ENCODE measurements at regions of chr2 and their contacts with region 1.

Region 1: GRCh38 chr2:14634201-14634884 is 1.8 kb downstream of the LRATD1 start:
- DNase-seq: peak; percentile 88
- H3K4me3 Mint-ChIP-seq: peak overlapping the region; percentile 75
- H3K27ac Mint-ChIP-seq: peak overlapping the region; percentile 88
- H3K4me1 Mint-ChIP-seq: peaks cover 15% of the 10 kb centered on the region
- H3K27me3 Mint-ChIP-seq: no peaks in the 10 kb centered on the region
- CTCF ChIP-seq: peak; percentile 72

Region 2: GRCh38 chr2:13056259-13056843 is 1578.0 kb before region 1 on chr2:
- CTCF ChIA-PET with region 1: interaction called, 4 read pairs
- POLR2A ChIA-PET with region 1: no interaction called
- intact Hi-C with region 1: loop called (anchors 2 kb)
- DNase-seq: peak; percentile 42
- H3K4me3 Mint-ChIP-seq: no peak overlapping the region
- H3K27ac Mint-ChIP-seq: no peak overlapping the region
- H3K4me1 Mint-ChIP-seq: no peaks in the 10 kb centered on the region
- H3K27me3 Mint-ChIP-seq: no peaks in the 10 kb centered on the region
- CTCF ChIP-seq: peak; percentile 29

Region 3: DNA sequence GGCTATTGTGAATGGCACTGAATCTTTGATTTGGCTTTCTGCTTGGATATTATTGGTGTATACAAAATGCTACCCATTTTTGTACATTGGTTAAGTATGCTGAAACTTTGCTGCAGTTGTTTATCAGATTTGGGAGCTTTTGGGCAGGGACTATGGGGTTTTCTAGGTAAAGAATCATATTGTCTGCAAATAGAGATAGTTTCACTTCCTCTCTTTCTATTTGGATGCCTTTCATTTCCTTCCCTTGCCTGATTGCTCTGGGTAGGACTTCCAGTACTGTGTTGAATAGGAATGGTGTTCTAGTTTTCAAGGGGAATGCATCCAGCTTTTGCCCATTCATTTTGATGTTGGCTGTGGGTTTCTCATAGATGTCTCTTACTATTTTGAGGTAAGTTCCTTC is 490.9 kb before region 1 on chr2:
- CTCF ChIA-PET with region 1: no interaction called
- POLR2A ChIA-PET with region 1: no interaction called
- intact Hi-C with region 1: no loop called
- DNase-seq: no peak
- H3K4me3 Mint-ChIP-seq: no peak overlapping the region
- H3K27ac Mint-ChIP-seq: no peak overlapping the region
- H3K4me1 Mint-ChIP-seq: no peaks in the 10 kb centered on the region
- H3K27me3 Mint-ChIP-seq: no peaks in the 10 kb centered on the region
- CTCF ChIP-seq: no peak

Region 4: GRCh38 chr2:14189929-14190328 is 444.4 kb before region 1 on chr2:
- CTCF ChIA-PET with region 1: no interaction called
- POLR2A ChIA-PET with region 1: no interaction called
- intact Hi-C with region 1: loop called (anchors 10 kb)
- DNase-seq: peak; percentile 68
- H3K4me3 Mint-ChIP-seq: peak overlapping the region; percentile 7
- H3K27ac Mint-ChIP-seq: peak overlapping the region; percentile 6
- H3K4me1 Mint-ChIP-seq: peaks cover 12% of the 10 kb centered on the region
- H3K27me3 Mint-ChIP-seq: no peaks in the 10 kb centered on the region
- CTCF ChIP-seq: no peak

Region 5: DNA sequence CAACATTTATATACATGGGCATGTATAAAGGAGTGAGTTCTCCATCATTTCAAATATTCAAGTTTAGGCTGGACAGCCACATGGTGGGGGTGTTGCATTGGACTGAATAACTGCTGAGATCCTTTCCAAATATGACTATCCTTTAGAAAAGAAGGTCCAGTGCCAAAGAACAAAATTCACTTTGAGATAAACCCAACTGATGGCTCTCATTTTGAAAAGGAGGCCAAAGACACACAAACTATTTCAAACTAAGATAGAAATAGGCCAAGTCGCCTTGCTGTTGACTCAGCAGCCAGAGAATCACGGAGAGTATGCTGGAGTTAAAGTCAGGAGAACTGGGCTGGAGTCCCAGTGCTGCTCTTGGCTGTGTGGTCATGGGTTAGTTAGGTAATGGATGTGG is 206.3 kb before region 1 on chr2:
- CTCF ChIA-PET with region 1: interaction called, 4 read pairs
- POLR2A ChIA-PET with region 1: no interaction called
- intact Hi-C with region 1: loop called (anchors 1 kb)
- DNase-seq: peak; percentile 46
- H3K4me3 Mint-ChIP-seq: no peak overlapping the region
- H3K27ac Mint-ChIP-seq: no peak overlapping the region
- H3K4me1 Mint-ChIP-seq: no peaks in the 10 kb centered on the region
- H3K27me3 Mint-ChIP-seq: no peaks in the 10 kb centered on the region
- CTCF ChIP-seq: no peak

Region 6: DNA sequence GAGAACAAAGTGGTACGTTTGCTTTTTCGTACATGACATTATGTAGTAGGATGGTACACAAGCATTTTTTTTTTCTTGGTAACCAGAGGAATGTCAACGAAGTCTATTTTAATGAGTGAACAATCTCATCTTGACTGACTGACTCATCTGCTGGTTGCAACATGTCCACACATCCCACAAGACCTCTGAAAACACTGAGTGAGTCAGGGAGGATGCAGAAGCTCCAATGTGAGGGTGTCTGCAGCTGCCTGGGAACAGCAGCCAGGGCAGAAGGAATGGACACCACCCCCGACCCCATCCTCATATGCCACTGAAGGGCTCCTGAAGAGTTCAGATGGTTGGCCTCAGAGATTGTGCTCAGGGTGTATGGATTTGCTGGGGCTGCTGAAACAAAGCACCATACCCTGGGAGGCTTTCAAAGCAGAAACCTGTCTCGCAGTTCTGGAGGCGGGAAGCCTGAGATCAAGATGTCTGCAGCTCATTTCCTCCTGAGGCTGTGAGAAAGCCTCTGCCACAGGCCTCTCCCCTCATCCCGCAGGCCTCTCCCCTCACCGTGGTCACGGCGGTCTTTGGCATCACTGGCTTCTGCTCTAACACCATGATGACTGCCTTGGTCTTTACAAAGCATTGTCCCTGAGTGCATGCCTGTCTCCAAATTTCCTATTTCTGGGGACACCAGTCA is 122.8 kb after region 1 on chr2:
- CTCF ChIA-PET with region 1: interaction called, 3 read pairs
- POLR2A ChIA-PET with region 1: interaction called, 3 read pairs
- intact Hi-C with region 1: loop called (anchors 2 kb)
- DNase-seq: peak; percentile 93
- H3K4me3 Mint-ChIP-seq: peak overlapping the region; percentile 20
- H3K27ac Mint-ChIP-seq: no peak overlapping the region
- H3K4me1 Mint-ChIP-seq: peaks cover 19% of the 10 kb centered on the region
- H3K27me3 Mint-ChIP-seq: no peaks in the 10 kb centered on the region
- CTCF ChIP-seq: no peak

Region 7: DNA sequence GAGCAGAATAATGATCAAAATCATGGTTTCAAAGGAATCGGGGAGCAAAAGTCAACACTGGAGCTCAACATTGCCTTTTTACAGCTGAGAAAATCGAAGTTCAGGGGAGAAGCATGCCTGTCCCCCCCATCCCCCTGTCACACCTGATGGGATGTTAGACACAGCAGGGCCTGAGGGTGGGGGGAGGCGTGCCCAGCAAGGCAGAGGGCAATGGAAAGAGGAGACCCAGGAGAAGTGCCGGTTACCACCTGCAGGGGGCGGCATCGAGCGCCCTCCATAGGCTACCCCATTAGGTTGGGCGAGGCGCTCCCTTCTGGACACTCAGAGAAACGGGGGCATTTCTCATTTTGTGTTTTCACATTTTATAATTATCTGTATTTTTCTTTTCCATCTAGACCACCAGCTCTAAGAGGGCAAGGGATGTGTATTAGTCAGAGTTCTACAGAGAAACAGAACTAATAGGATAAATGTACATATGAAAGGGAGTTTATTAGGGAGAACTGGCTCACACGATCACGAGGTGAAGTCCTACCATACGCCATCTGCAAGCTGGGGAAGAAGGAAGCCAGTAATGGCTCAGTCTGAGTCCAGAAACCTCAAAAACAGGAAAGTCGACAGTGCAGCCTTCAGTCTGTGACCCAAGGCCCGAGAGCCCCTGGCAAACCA is 269.5 kb after region 1 on chr2:
- CTCF ChIA-PET with region 1: no interaction called
- POLR2A ChIA-PET with region 1: no interaction called
- intact Hi-C with region 1: loop called (anchors 5 kb)
- DNase-seq: peak; percentile 74
- H3K4me3 Mint-ChIP-seq: no peak overlapping the region
- H3K27ac Mint-ChIP-seq: no peak overlapping the region
- H3K4me1 Mint-ChIP-seq: no peaks in the 10 kb centered on the region
- H3K27me3 Mint-ChIP-seq: no peaks in the 10 kb centered on the region
- CTCF ChIP-seq: peak; percentile 67

Region 8: DNA sequence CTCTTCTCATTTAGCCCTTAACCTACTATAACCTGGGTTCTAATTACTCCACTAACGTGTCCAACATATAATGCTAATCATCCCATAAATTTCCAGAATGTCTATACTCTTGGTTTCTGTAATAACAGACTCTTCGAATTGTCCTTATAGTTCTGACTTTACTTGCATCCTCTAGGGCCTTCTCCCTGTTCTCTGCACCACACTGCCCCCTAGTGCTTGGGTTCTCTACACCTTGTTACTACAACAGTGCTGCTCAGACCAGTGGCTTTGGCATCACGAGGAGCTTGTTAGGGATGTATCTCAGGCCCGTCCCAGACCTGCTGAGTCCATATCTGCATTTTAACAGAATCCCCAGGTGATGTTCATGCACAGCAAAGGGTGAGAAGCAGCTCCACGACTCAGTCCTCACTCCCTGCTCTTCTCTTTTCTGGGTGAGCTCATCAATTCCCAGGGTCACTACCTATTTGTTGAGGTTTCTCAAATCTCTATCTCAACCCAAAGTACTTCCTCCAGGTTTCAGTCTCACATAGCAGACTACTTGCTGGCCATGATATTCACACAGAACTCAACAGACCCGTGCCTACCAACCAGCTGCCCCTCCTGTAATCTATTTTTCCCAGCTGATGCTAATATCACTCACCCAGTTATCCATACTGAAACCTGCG is 942.9 kb after region 1 on chr2:
- CTCF ChIA-PET with region 1: no interaction called
- POLR2A ChIA-PET with region 1: interaction called, 4 read pairs
- intact Hi-C with region 1: loop called (anchors 5 kb)
- DNase-seq: peak; percentile 93
- H3K4me3 Mint-ChIP-seq: no peak overlapping the region
- H3K27ac Mint-ChIP-seq: no peak overlapping the region
- H3K4me1 Mint-ChIP-seq: no peaks in the 10 kb centered on the region
- H3K27me3 Mint-ChIP-seq: no peaks in the 10 kb centered on the region
- CTCF ChIP-seq: peak; percentile 69